ENCODE measurements at regions of chr1 and their contacts with region 1.

Region 1: GRCh38 chr1:204363335-204364124 is 3.8 kb upstream of the PLEKHA6 start:
- DNase-seq: peak; percentile 84
- ATAC-seq: peak; percentile 86
- H3K4me3 Mint-ChIP-seq: peak overlapping the region; percentile 46
- H3K27ac Mint-ChIP-seq: peak overlapping the region; percentile 52
- H3K4me1 Mint-ChIP-seq: peaks cover 12% of the 10 kb centered on the region
- H3K27me3 Mint-ChIP-seq: peaks cover 3% of the 10 kb centered on the region

Region 2: DNA sequence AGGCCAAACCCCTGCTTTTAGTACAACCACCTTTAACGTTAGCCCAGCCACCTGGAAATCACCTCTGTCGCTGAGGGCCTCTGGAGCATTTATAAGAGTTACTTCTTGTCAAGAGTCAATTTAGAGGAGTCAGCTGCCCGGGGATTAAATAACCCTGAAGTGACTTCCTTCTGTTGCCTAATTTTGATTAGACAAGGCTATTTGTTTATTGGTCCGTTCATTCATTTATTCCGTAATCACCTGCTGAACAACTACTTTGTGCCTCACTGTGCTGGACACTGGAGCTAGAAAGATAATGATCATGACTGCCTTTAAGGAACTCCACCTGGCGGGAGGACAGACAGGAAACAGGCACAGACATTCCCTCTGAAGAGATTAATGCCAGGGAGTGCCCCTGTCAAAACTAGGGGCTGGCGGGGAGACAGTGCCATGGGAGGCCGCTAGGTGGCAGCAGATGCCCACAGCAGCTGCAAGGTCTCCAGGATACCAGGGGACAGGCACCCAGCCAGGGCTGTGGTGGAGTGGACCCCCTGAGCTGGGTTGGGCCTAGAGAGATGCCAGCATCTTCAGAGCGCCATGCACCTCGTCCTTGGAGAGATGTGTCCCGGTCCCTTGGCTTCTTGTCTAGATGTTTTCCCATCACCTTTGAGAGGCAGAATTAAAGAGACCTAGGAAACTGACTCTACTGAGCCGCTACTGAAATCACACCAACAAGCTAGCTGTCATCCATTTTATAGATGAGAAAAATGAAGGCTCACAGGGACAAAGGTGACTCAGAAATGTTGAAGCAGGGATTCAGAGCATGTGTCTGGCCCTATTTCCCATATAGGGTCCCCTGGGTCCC is 201.1 kb before region 1 on chr1:
- CTCF ChIA-PET with region 1: interaction called, 39 read pairs
- DNase-seq: peak; percentile 80
- ATAC-seq: peak; percentile 88
- H3K4me3 Mint-ChIP-seq: no peak overlapping the region
- H3K27ac Mint-ChIP-seq: no peak overlapping the region
- H3K4me1 Mint-ChIP-seq: no peaks in the 10 kb centered on the region
- H3K27me3 Mint-ChIP-seq: peaks cover 3% of the 10 kb centered on the region

Region 3: DNA sequence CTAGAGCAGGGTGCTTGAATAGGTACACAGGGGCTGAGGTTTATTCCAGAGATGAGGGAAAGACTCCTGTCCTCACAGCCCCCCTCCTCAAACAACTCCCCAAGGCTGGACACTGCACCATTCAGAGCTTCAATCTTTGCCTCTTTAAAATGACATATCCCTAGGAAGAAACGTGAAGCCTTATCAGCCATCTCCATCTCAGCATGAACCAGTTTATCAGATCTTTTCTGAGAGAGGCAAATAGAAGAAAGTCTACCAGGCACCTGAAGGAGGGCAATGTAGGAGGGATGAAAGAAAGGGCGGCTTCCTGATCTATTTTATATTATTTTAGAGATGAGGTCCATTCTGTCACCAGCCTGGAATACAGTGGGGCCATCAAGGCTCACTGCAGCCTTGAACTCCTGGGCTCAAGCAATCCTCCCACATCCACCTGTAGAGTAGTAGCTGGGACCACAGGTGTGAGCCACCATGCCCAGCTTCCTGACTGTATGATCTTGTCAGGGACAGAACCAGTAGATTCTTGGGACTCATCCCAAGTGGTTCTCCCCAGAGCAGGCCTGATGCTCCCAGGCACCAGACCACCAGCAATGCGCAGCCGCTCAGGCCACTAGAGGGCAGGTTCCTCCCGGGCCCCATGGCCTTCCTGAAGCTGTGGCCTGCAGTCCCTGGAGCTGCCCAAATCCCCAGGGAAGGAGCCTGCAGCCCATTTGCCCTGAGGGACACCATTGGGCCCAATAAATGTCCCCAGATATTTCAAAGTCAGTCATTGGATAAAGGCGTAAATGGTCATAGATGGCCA is 105.4 kb before region 1 on chr1:
- CTCF ChIA-PET with region 1: interaction called, 31 read pairs
- DNase-seq: peak; percentile 44
- ATAC-seq: peak; percentile 51
- H3K4me3 Mint-ChIP-seq: no peak overlapping the region
- H3K27ac Mint-ChIP-seq: no peak overlapping the region
- H3K4me1 Mint-ChIP-seq: no peaks in the 10 kb centered on the region
- H3K27me3 Mint-ChIP-seq: peaks cover 3% of the 10 kb centered on the region

Region 4: DNA sequence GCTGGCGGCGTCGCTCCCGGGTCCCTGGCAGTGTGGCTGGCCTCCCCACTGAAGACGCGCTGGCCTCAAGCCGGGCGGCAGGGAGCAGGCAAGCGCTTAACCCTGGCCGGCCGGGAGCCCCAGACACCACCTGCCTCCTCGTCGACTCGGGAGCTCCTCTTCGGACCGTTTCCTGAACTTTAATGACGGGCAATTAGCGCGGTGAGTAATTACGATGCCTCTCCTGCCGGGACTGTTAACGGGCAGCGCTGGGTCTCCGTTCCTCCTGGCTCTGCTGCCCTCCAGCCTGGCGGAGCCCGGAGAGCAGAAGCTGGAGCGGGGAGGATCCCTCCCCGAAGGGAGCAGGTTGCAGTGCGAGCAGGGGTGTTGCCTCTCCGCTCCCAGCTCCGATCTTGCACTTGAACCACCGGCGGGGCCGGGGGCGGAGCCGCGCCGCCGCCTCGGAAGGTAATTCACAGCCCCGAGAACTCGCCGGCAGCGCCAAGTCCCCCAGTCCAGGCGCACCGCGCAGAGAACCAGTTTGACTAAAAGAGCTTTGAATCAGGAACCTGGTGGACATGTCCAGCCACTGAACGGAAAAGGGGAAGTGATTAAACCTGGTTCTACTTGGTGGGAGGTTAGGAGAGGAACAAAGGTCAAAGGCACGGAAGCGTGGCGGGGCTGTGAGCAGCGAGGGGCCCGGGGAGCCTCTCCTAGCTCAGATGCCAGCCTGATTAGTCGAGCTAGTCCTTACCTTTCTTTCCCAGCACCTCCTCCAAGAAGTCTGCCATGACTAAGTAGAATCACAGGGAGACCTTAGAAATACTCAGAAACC is 14.5 kb after region 1 on chr1:
- CTCF ChIA-PET with region 1: interaction called, 36 read pairs
- DNase-seq: peak; percentile 55
- ATAC-seq: peak; percentile 74
- H3K4me3 Mint-ChIP-seq: peak overlapping the region; percentile 73
- H3K27ac Mint-ChIP-seq: no peak overlapping the region
- H3K4me1 Mint-ChIP-seq: peaks cover 11% of the 10 kb centered on the region
- H3K27me3 Mint-ChIP-seq: peaks cover 44% of the 10 kb centered on the region

Region 5: GRCh38 chr1:204411451-204412204 is 48.1 kb after region 1 on chr1 and contains the start of gene PPP1R15B:
- CTCF ChIA-PET with region 1: no interaction called
- DNase-seq: peak; percentile 98
- ATAC-seq: peak; percentile 91
- H3K4me3 Mint-ChIP-seq: peak within 1 kb of the TSS; percentile 92
- H3K27ac Mint-ChIP-seq: peak within 1 kb of the TSS; percentile 100
- H3K4me1 Mint-ChIP-seq: peaks cover 16% of the 10 kb centered on the region
- H3K27me3 Mint-ChIP-seq: no peaks in the 10 kb centered on the region
- total RNA-seq, gene PPP1R15B: 75.5 to 81.7 TPM

Measured in activated CD8-positive, alpha-beta memory T cell treated with anti-CD3 and anti-CD28 coated beads, Interleukin-2, amount 10 ng/mL, durations not matched to agents 7 days and 5 days (primary cell).